Endothelial cell of umbilical vein (primary cell): ENCODE measurements at regions of chr11 and their contacts with region 1.

Region 1: GRCh38 chr11:13210424-13210823 is 67.2 kb upstream of the BMAL1 start:
- DNase-seq: peak; percentile 70
- H3K4me3 ChIP-seq: no peak overlapping the region
- H3K27ac ChIP-seq: no peak overlapping the region
- H3K4me1 ChIP-seq: peaks cover 24% of the 10 kb centered on the region
- H3K27me3 ChIP-seq: no peaks in the 10 kb centered on the region
- CTCF ChIP-seq: peak; percentile 51 to 52
- POLR2A ChIP-seq: no peak

Region 2: DNA sequence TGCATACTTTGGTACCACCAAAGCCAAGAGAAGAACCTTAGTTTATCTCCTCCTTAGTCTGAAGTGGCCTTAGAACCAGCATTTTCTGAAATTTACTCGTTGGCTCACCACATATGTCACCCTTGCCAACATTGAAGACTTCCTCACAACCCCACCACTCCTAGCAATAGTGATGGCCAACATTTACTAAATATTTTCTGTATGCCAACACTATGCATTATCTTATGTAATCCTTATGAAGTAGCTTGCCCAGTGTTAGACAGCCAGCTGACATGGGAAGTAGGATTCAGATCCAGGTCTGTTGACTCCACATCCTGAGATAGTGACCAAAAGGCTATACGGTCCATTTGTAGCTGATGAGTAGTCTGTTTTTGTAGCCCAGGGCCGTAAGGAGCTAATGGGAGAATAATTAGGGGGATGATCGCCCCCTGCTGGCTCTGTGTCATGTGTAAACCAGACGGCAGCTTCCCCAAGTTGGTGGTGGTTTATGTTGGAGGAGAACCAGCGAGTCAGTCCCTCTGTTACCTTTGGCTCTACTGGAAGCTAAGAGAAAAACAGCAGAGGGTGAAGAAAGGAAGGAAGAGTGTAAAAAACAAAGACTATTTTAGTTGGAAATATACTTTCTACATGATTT is 321.8 kb before region 1 on chr11:
- CTCF ChIA-PET with region 1: no interaction called
- POLR2A ChIA-PET with region 1: no interaction called
- dilution Hi-C with region 1: no loop called
- intact Hi-C with region 1: no loop called
- DNase-seq: peak; percentile 96
- H3K4me3 ChIP-seq: no peak overlapping the region
- H3K27ac ChIP-seq: no peak overlapping the region
- H3K4me1 ChIP-seq: peaks cover 9% of the 10 kb centered on the region
- H3K27me3 ChIP-seq: no peaks in the 10 kb centered on the region
- CTCF ChIP-seq: peak; percentile 82 to 86
- POLR2A ChIP-seq: no peak

Region 3: GRCh38 chr11:13019313-13019712 is 191.1 kb before region 1 on chr11:
- CTCF ChIA-PET with region 1: no interaction called
- POLR2A ChIA-PET with region 1: no interaction called
- dilution Hi-C with region 1: no loop called
- intact Hi-C with region 1: no loop called
- DNase-seq: no peak
- H3K4me3 ChIP-seq: no peak overlapping the region
- H3K27ac ChIP-seq: no peak overlapping the region
- H3K4me1 ChIP-seq: no peaks in the 10 kb centered on the region
- H3K27me3 ChIP-seq: peaks cover 18 to 44% of the 10 kb centered on the region in 2 experiments
- CTCF ChIP-seq: no peak
- POLR2A ChIP-seq: no peak

Region 4: GRCh38 chr11:13073119-13073981 is 137.1 kb before region 1 on chr11:
- CTCF ChIA-PET with region 1: no interaction called
- POLR2A ChIA-PET with region 1: no interaction called
- dilution Hi-C with region 1: no loop called
- intact Hi-C with region 1: no loop called
- DNase-seq: peak; percentile 16
- H3K4me3 ChIP-seq: no peak overlapping the region
- H3K27ac ChIP-seq: no peak overlapping the region
- H3K4me1 ChIP-seq: no peaks in the 10 kb centered on the region
- H3K27me3 ChIP-seq: peaks cover 20 to 25% of the 10 kb centered on the region in 2 experiments
- CTCF ChIP-seq: no peak
- POLR2A ChIP-seq: no peak

Region 5: DNA sequence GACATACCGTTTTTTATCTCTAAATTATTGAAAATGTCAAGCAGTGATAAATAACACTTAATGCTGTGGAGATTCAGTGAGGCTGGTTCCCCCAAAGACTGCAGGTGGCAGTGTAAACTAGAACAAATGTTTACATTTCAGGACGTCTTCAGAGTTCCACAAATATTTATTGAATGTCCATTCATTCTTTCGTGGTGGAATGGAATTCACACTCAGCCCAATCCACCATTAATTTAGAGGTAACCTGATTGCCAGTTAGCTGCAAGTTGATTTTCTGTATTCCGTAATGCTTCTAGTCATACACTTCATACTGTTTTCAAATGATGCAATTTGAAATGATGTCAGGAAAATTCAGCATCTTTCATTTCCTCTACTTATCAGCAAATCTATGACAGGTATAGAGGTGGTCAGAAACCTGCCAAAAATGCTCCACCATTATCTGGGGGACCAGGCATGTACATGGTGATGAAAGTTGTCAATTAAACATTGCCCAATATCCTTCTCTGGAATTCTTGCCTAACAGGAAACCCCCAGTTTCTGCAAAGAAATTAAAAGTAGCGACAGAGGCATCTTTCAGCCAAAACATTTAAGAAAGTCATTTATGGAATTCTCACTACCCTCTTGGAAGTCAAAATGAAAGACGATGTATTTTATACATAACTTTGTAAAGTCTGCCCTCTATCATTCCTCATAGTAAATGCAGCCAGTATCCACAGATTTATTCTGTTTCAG is 27.2 kb before region 1 on chr11:
- CTCF ChIA-PET with region 1: interaction called, 6 read pairs
- POLR2A ChIA-PET with region 1: no interaction called
- dilution Hi-C with region 1: no loop called
- intact Hi-C with region 1: loop called (anchors 1 kb)
- DNase-seq: peak; percentile 56
- H3K4me3 ChIP-seq: no peak overlapping the region
- H3K27ac ChIP-seq: no peak overlapping the region
- H3K4me1 ChIP-seq: peaks cover 6% of the 10 kb centered on the region
- H3K27me3 ChIP-seq: peaks cover 8 to 12% of the 10 kb centered on the region in 2 experiments
- CTCF ChIP-seq: peak; percentile 34 to 46
- POLR2A ChIP-seq: no peak

Region 6: DNA sequence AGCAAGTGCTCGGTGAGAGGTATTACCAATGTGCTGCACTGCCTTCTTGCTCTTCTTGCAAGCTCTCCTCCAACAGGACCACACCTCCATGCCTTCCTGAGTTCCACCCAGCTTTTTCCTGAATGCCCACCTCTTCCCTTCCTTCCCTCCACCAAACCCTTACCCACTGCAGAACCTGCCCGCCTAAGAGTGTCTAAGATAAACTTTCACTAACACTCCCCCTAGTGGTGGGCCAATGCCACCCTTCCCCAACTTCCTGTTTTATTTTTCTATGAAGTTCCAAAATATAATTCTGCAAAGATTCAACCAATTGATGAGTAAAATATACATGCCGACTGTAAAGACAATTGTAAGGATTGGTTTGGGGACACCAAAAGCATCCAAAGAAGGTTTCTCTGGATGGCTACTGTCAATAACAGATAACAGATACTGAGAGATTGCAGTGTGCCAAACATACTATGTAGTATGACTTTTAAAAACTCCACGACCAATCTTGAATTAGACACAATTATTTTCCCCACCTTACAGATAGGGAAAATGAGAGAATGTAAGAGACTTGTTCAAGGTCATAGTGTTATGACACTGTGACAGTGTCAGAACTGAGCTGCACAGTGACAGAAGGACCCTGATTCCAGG is 28.6 kb after region 1 on chr11:
- CTCF ChIA-PET with region 1: interaction called, 170 read pairs
- POLR2A ChIA-PET with region 1: no interaction called
- dilution Hi-C with region 1: no loop called
- intact Hi-C with region 1: loop called (anchors 1 kb)
- DNase-seq: peak; percentile 38
- H3K4me3 ChIP-seq: no peak overlapping the region
- H3K27ac ChIP-seq: no peak overlapping the region
- H3K4me1 ChIP-seq: no peaks in the 10 kb centered on the region
- H3K27me3 ChIP-seq: peaks cover 11 to 20% of the 10 kb centered on the region in 2 experiments
- CTCF ChIP-seq: peak; percentile 74 to 81
- POLR2A ChIP-seq: no peak

Region 7: GRCh38 chr11:13297917-13298356 is 87.5 kb after region 1 on chr11:
- CTCF ChIA-PET with region 1: interaction called, 23 read pairs
- POLR2A ChIA-PET with region 1: no interaction called
- dilution Hi-C with region 1: no loop called
- intact Hi-C with region 1: no loop called
- DNase-seq: no peak
- H3K4me3 ChIP-seq: no peak overlapping the region
- H3K27ac ChIP-seq: no peak overlapping the region
- H3K4me1 ChIP-seq: no peaks in the 10 kb centered on the region
- H3K27me3 ChIP-seq: no peaks in the 10 kb centered on the region
- CTCF ChIP-seq: no peak
- POLR2A ChIP-seq: no peak

Region 8: DNA sequence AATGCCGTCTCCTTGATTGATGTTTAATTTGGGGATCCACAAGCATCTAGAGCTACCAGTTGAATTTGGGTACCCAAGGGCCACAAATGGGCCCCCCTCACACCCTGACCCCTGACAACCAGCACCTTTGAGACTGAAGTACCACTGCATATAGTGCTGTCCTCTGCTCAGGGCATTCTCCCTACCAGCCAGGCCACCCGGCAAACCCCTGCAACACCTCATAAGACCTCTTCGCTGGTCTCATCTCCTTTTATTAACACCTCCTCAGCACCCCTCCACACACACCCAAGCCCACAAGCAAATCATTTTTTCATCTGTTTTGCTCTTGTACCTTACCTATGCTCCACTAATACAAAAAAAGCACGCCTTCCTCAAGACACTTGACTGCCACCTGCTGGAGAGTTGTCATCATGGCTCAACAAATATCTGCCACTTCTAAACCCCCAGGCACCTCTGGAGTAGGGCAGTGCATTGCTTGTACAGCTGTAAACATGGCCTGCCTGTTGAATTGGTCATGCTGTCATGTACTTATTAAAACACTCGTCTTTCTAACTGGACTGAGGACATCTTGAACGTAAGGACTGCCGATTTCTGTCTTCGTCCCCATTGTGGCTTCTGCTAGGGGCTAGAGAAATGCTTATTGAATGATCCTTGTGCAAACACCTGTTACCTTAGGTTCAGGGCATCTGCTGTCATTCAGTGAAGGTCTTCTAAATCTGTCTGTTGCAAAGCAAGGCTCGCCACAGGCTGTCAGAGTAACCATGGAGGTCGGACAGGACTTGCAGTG is 133.7 kb after region 1 on chr11:
- CTCF ChIA-PET with region 1: interaction called, 180 read pairs
- POLR2A ChIA-PET with region 1: no interaction called
- dilution Hi-C with region 1: no loop called
- intact Hi-C with region 1: loop called (anchors 1 kb)
- DNase-seq: peak; percentile 70
- H3K4me3 ChIP-seq: no peak overlapping the region
- H3K27ac ChIP-seq: no peak overlapping the region
- H3K4me1 ChIP-seq: peaks cover 8% of the 10 kb centered on the region
- H3K27me3 ChIP-seq: no peaks in the 10 kb centered on the region
- CTCF ChIP-seq: peak; percentile 73 to 78
- POLR2A ChIP-seq: no peak

Region 9: DNA sequence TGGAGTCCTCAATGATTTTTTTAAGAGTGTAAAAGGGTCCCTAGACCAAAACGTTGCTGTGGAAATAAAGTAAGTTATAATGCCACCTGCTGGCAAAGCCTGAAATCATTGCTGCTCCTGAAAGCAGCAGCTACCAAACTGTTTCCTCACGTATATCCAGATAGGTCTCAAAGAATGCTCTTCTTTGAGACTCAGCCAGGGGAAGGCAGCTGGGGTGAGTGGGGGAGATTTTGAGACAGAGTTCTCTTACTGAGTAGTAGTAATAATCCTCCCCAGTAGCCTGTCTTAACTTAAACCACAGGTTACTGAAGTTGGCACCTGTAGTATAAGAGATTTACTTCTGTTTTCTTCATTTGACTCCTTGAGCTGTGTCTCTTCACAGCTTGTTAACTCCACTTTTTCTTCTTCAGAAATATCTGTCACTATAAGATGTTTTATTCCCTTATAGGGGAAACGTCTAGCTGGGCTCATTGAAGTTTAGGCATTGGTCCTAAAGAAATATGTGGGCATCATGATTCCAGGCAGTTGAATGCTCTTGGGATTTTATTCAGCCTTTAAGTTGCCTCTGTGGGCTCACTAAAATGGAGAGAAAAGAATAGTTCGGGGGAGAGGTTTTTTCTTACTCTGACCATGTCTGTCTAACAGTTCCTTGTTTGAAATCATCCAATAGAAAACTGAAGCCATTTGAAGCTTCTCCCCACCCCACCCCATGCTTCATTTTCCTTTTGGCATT is 174.7 kb after region 1 on chr11:
- CTCF ChIA-PET with region 1: interaction called, 59 read pairs
- POLR2A ChIA-PET with region 1: no interaction called
- dilution Hi-C with region 1: no loop called
- intact Hi-C with region 1: loop called (anchors 1 kb)
- DNase-seq: peak; percentile 65
- H3K4me3 ChIP-seq: no peak overlapping the region
- H3K27ac ChIP-seq: no peak overlapping the region
- H3K4me1 ChIP-seq: no peaks in the 10 kb centered on the region
- H3K27me3 ChIP-seq: no peaks in the 10 kb centered on the region
- CTCF ChIP-seq: peak; percentile 50 to 58
- POLR2A ChIP-seq: no peak

Region 10: GRCh38 chr11:13668102-13668956 is 457.9 kb after region 1 on chr11 and contains the start of gene FAR1:
- CTCF ChIA-PET with region 1: no interaction called
- POLR2A ChIA-PET with region 1: no interaction called
- dilution Hi-C with region 1: no loop called
- intact Hi-C with region 1: loop called (anchors 5 kb)
- DNase-seq: peak; percentile 100
- H3K4me3 ChIP-seq: peak within 1 kb of the TSS; percentile 84 to 95 (median 90)
- H3K27ac ChIP-seq: peak within 1 kb of the TSS; percentile 81
- H3K4me1 ChIP-seq: peaks cover 20% of the 10 kb centered on the region
- H3K27me3 ChIP-seq: no peaks in the 10 kb centered on the region
- CTCF ChIP-seq: peak; percentile 59 to 71
- POLR2A ChIP-seq: peak; percentile 75
- total RNA-seq, gene FAR1: 72.3 and 76.4 TPM in 2 replicates